Activated CD4-positive, alpha-beta memory T cell treated with anti-CD3 and anti-CD28 coated beads for 36 hours (primary cell): ENCODE measurements at regions of chr2 and their contacts with region 1.

Region 1: GRCh38 chr2:30146438-30147147 is at the start of gene YPEL5:
- DNase-seq: peak; percentile 99
- H3K4me3 Mint-ChIP-seq: peak within 1 kb of the TSS; percentile 82
- H3K27ac Mint-ChIP-seq: peak within 1 kb of the TSS; percentile 95
- H3K4me1 Mint-ChIP-seq: peaks cover 51% of the 10 kb centered on the region
- H3K27me3 Mint-ChIP-seq: no peaks in the 10 kb centered on the region
- total RNA-seq, gene YPEL5: 43.3 to 43.4 TPM

Region 2: DNA sequence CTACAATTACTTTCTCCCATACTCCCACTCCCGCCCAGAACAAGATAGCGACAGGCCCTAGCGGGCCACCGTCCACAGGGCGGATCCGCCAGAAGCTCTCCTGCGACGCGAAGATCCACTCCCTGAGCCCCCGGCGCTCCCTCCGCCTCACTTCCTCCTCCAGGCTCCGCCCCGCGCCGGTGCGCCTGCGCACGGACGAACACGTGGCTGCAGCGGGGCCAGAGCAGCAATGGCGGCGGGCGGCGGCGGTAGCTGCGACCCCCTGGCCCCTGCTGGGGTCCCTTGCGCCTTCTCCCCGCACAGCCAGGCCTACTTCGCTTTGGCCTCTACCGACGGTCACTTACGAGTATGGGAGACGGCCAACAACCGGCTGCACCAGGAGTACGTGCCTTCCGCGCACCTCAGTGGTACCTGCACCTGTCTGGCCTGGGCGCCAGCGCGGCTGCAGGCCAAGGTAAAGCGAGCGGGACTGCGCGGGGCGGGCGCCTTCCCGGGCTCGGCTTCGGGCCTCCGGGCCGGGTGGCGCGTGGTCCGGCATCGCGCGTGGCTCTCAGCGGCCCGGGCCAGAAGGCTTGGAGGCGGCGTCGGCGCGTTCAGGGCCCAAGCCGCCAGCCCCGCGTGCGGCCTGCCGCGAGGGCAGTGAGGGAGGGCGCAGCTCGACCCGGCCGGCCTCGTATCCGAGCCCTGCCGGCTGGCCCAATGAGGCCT is 1252.0 kb before region 1 on chr2 and contains the start of gene WDR43:
- CTCF ChIA-PET with region 1: no interaction called
- POLR2A ChIA-PET with region 1: no interaction called
- intact Hi-C with region 1: loop called (anchors 2 kb)
- DNase-seq: peak; percentile 98
- H3K4me3 Mint-ChIP-seq: peak within 1 kb of the TSS; percentile 93
- H3K27ac Mint-ChIP-seq: peak within 1 kb of the TSS; percentile 94
- H3K4me1 Mint-ChIP-seq: peaks cover 34% of the 10 kb centered on the region
- H3K27me3 Mint-ChIP-seq: no peaks in the 10 kb centered on the region
- total RNA-seq, gene WDR43: 72.7 to 84.8 TPM

Region 3: DNA sequence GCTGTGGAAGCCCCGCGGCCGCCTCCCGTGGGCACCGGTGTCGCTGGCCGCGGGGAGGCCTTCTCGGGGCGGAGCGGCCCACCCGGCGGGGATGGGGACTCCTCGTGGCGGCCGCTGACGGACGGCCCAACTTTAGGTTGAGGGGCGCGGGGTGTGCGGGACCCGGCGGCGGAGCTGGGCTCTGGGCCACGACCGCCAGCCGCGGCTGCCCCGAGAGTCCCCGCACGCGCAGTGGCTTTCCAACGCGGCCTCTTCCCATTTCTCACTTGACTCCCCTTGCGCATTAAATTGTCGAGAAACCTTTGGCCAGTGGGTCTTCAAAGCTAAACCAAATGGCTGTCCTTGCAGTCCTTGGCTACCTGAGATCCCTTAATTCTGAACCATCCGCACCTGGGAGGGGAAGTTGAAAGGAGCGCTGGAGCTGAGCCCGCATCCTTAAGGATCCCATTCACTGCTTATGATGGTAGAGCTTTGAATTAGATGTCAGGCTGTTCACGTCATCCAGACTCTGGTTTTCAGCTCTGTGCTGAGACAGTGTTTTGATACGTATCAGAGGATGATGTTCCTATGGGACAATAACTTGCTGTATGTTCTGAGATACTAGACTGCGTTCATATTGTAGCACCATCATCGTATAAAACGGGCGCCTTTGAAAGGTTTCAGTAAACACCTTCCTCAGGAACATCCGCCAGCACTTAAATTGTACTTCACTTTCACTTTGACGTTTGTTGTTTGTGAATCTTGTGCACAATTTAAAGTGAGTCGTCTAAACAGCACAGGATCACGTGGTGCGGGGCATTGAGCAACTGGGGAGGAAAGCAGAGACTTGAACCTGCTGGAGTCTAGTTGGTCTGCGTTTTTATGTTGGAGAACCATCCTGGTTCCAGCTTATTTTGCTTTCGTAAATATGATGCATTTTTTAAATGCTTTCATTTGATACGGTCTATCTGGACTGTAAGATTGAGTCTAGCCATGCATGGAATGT is 1030.5 kb before region 1 on chr2:
- CTCF ChIA-PET with region 1: no interaction called
- POLR2A ChIA-PET with region 1: no interaction called
- intact Hi-C with region 1: loop called (anchors 5 kb)
- DNase-seq: peak; percentile 85
- H3K4me3 Mint-ChIP-seq: peak overlapping the region; percentile 88
- H3K27ac Mint-ChIP-seq: peak overlapping the region; percentile 93
- H3K4me1 Mint-ChIP-seq: peaks cover 58% of the 10 kb centered on the region
- H3K27me3 Mint-ChIP-seq: no peaks in the 10 kb centered on the region

Region 4: DNA sequence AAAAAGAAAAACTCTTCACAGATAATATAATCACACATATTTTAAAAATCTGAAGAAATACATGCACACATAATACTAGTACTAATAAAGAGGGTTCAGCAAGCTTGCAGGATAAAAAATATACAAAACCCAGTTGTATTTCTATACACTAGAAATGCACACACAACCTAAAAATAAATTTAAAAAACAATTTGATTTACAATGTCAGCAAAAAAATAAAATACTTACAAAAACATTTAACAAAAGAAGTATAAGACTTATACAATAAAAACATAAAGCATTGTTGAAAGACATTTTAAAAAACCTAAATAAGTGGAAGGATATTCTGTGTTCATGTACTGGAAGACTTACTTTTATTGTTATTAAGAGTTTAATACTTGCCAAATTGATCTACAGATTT is 143.5 kb before region 1 on chr2:
- CTCF ChIA-PET with region 1: no interaction called
- POLR2A ChIA-PET with region 1: no interaction called
- intact Hi-C with region 1: no loop called
- DNase-seq: no peak
- H3K4me3 Mint-ChIP-seq: no peak overlapping the region
- H3K27ac Mint-ChIP-seq: no peak overlapping the region
- H3K4me1 Mint-ChIP-seq: no peaks in the 10 kb centered on the region
- H3K27me3 Mint-ChIP-seq: peaks cover under 1% of the 10 kb centered on the region

Region 5: DNA sequence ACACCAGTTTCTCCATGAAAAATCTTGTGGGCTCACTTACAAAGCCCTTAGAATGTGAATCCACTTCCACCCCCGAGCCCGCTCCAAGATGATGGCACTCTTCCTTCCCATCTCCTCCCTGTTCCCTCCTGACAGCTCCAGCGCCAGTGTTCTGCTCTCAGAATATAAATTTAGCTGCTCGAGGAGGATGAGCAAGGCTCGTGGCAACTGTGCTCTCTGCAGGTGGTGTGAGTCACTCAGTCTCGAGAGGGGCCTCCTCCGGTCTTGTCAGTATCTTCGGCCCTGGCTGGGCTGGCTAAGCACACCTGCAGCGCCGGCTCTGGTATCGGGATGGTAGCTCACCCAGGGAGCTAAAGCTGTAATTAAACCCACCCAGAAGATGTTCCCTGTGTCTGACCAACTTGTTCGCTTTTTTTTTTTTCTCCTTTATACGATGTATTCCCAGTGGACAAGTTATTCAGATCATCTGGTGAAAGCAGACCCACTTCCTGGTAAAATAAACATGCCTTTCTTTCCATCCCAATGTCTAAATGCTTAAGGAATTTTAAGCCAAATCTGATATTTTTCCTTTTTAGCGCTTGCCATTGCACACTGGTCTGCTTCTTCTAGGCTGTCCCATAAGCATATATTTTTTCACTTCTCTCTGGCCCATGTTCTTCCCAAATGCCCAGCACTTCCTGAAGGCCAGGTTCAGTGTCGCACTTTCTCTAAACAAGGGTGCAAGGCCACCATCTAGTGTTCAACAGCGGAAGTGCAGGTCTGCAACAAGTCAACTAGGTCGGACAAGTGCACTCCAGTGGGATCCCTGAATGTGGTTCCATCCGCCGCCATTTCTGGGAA is 31.2 kb before region 1 on chr2:
- CTCF ChIA-PET with region 1: interaction called, 12 read pairs
- POLR2A ChIA-PET with region 1: no interaction called
- intact Hi-C with region 1: no loop called
- DNase-seq: peak; percentile 78
- H3K4me3 Mint-ChIP-seq: no peak overlapping the region
- H3K27ac Mint-ChIP-seq: no peak overlapping the region
- H3K4me1 Mint-ChIP-seq: peaks cover 4% of the 10 kb centered on the region
- H3K27me3 Mint-ChIP-seq: peaks cover 2% of the 10 kb centered on the region

Region 6: DNA sequence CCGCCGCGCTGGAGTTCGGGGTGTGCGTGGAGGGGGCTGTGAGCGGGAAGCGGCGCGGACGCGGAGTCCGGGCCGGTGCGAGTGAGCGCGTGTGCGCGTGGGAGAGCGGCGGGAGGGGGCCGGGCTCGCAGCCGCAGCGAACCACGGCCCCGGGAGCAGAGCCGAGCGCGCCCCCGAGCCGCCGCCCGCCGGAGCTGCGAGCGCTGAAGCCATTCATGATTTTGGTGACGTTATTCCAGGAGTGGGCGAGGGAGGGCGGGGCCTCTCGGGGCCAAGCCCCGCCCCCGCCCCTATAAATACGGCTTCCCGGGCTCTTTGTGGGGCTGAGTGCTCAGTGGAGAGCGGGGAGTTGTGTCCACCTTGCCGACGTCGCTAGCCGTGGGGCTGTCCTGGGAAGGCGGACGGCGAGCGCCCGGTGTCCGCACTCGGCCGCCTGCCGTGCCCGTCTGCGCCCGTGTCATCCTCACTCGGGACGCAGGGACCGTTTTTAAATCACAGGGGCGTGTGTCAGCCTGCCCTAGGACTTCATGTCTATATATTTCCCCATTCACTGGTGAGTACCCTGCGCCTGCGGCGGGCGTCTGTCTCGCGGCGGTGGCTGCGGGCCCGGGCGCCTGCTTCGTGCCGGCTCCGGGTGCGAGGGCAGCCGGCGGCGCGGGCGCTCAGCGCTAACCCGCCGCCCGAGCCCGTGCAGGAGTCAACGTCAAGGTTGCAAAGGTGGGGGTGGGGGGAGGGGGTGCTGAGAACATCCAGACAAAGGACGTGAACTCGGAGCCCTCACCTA is 84.8 kb after region 1 on chr2 and contains the start of gene LBH:
- CTCF ChIA-PET with region 1: interaction called, 8 read pairs
- POLR2A ChIA-PET with region 1: interaction called, 43 read pairs
- intact Hi-C with region 1: loop called (anchors 1 kb)
- DNase-seq: peak; percentile 94
- H3K4me3 Mint-ChIP-seq: peak within 1 kb of the TSS; percentile 84
- H3K27ac Mint-ChIP-seq: peak within 1 kb of the TSS; percentile 94
- H3K4me1 Mint-ChIP-seq: peaks cover 63% of the 10 kb centered on the region
- H3K27me3 Mint-ChIP-seq: no peaks in the 10 kb centered on the region
- total RNA-seq, gene LBH: 109 to 112 TPM

Region 7: DNA sequence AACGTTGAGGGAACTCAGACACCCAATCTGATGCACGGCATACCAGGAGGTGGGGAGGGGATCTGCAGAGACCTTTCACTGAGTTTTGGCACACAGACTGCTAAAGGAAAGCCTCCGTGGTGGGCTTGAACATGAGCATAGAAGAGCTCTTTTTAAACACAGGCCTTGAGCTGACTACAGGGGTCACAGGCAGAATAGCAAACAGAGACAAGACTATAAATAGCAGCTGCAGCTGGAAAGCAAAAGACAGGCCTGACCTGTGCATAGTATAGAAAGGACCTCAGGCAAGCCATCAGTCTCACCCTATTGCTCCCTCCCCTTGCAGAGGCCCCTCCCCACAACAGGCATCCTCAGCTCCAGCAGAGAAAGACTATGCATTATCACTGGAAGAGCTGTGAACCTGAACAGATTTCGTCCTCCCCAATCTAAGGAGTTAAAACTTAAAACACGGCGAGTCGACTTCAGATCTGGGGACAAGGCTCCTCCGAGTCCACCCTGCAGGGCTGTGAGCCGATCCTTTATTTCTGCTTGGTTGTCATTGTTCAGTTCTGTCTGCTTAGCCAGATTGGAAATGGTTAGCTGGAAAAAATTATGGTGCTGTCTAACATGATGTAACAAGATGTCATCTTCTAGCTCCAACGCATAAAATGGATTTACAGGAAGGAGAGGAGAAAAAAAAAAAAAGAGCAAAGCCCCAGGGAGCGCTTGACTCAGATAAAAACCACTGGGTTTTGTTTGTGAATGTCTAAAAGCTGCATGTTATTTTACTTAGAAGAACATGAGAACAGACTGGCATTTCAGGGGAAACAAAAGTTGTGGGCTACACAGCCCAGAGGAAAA is 275.2 kb after region 1 on chr2:
- CTCF ChIA-PET with region 1: no interaction called
- POLR2A ChIA-PET with region 1: interaction called, 4 read pairs
- intact Hi-C with region 1: loop called (anchors 1 kb)
- DNase-seq: peak; percentile 44
- H3K4me3 Mint-ChIP-seq: peak overlapping the region; percentile 69
- H3K27ac Mint-ChIP-seq: peak overlapping the region; percentile 91
- H3K4me1 Mint-ChIP-seq: peaks cover 41% of the 10 kb centered on the region
- H3K27me3 Mint-ChIP-seq: no peaks in the 10 kb centered on the region

Region 8: GRCh38 chr2:31319406-31320175 is 1173.0 kb after region 1 on chr2:
- CTCF ChIA-PET with region 1: no interaction called
- POLR2A ChIA-PET with region 1: no interaction called
- intact Hi-C with region 1: loop called (anchors 5 kb)
- DNase-seq: peak; percentile 65
- H3K4me3 Mint-ChIP-seq: no peak overlapping the region
- H3K27ac Mint-ChIP-seq: no peak overlapping the region
- H3K4me1 Mint-ChIP-seq: peaks cover 57% of the 10 kb centered on the region
- H3K27me3 Mint-ChIP-seq: no peaks in the 10 kb centered on the region